SK-N-SH (cell line): ENCODE measurements at regions of chr9 and their contacts with region 1.

Region 1: DNA sequence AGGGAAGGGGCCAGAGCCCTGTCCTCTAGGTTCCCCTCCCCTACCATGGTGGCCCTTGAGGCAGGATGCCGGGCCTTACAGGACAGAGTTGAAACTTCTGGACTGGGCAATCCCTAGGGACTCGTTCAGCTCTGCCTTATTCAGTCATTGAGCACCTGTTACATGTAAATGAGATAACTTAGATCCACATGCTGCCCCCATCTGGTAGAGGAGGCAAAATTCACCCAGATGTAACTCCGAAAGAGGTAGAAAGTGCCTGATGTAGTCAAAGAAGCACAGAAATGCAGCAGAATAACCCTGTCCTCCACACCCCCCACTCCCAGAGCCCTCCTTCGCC is 1.5 kb downstream of the GGTA1 start:
- DNase-seq: peak; percentile 82
- H3K4me3 ChIP-seq: peak overlapping the region; percentile 52 to 70
- H3K27ac ChIP-seq: no peak overlapping the region
- H3K4me1 ChIP-seq: peaks cover 0 to 18% of the 10 kb centered on the region in 2 experiments; a peak in 2 of 4 replicates
- H3K27me3 ChIP-seq: no peaks in the 10 kb centered on the region
- CTCF ChIP-seq: peak; percentile 76
- EP300 ChIP-seq: no peak
- RAD21 ChIP-seq: peak; percentile 61

Region 2: DNA sequence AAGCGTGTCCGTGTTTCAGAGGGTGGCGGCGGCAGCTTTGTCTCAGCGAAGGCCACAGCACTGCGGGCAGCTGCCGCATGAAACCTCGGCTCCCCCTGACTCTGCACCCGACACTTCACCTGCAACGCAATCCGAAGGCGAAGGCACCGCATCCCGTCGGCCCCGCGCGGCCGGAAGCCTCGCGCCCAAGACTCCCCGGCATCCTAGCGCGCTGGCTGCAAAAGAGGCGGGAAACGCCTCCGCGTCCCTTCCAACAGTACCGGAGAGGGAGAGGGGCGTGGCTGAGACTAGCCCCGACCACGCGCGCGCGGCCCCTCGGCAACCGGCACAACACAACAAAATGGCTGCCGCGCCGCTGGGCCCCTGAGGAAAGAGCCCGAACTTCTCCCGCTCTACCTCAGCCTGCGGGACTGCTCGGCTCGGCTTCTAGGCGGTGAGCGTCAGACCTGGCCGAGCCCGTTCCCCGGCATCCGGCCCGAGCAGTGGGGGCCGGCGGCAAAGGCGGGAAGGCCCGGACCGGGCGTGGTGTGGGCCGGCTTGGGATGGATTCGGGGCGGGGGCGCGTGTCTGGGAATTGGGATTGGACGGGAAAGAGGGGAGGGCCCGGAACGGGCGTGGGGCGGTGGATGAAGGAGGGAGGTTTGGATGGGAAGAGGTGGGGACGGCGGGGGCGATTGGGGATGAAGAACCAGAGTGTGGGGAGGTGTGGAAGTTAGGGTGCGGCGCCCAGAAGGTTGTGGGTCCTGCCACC is 423.3 kb before region 1 on chr9 and contains the start of gene CNTRL:
- CTCF ChIA-PET with region 1: no interaction called
- POLR2A ChIA-PET with region 1: no interaction called
- DNase-seq: peak; percentile 93
- H3K4me3 ChIP-seq: peak within 1 kb of the TSS; percentile 76 to 84
- H3K27ac ChIP-seq: peak within 1 kb of the TSS; percentile 93 to 94
- H3K4me1 ChIP-seq: peaks cover 7 to 12% of the 10 kb centered on the region in 2 experiments; a peak in 3 of 4 replicates
- H3K27me3 ChIP-seq: no peaks in the 10 kb centered on the region
- CTCF ChIP-seq: no peak
- EP300 ChIP-seq: no peak
- RAD21 ChIP-seq: no peak
- polyA plus RNA-seq, gene CNTRL: 3.6 and 4.1 TPM in 2 replicates

Region 3: DNA sequence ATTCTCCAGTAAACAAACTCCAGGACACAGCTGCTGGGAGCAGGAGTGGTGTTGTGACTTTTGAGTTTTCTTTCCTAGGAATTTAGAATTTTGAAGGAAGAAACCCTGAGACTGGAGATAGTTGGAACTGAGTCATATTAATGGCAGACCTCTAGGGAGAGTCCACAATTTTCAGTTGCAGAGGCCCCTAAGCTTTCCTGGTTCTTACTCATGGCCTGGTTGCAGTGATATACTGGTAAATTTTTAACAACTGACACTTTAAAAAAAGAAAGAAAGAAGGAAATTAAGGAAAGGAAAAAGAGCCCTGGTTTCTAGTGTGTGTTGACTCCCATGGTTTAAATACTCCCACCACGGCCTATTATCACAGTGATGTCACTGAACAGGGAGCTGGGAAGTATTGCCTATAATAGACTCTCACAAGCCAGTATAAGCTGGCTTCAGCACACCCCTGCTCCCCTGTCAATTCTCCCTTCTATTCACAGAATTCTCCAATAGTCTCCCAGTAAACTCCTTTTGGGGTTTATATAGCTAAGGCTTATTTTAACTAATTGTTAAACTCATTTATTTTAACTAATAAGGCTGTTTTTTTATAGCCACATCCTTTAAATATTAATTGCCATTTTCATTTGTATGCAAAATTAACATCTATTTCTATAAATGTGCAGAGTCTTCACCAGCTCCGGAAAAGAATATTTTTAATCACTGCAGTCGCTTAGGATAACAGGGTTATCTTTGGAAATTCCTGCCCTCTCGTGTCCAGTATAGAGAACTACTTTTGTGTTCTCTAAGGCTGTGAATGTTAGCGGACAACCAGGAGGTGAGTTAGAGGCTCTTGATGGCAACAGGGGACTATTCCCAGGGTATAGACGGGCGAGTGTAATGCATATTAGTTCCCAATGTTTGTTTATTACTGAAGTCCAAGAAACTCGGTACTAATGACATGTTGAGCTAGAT is 58.1 kb before region 1 on chr9:
- CTCF ChIA-PET with region 1: interaction called, 10 read pairs
- POLR2A ChIA-PET with region 1: no interaction called
- DNase-seq: peak; percentile 33
- H3K4me3 ChIP-seq: no peak overlapping the region; a peak in 1 of 4 replicates
- H3K27ac ChIP-seq: no peak overlapping the region
- H3K4me1 ChIP-seq: no peaks in the 10 kb centered on the region
- H3K27me3 ChIP-seq: peaks cover 17% of the 10 kb centered on the region; the same call in 1 of the 2 replicates
- CTCF ChIP-seq: peak; percentile 53
- EP300 ChIP-seq: no peak
- RAD21 ChIP-seq: peak; percentile 45

Region 4: GRCh38 chr9:121510766-121511550 is 12.8 kb after region 1 on chr9:
- CTCF ChIA-PET with region 1: interaction called, 11 read pairs
- POLR2A ChIA-PET with region 1: interaction called, 3 read pairs
- DNase-seq: peak; percentile 77
- H3K4me3 ChIP-seq: no peak overlapping the region
- H3K27ac ChIP-seq: peak overlapping the region; percentile 40 to 96; a peak in 3 of 4 replicates
- H3K4me1 ChIP-seq: peaks cover 0 to 12% of the 10 kb centered on the region in 2 experiments; a peak in 2 of 4 replicates
- H3K27me3 ChIP-seq: no peaks in the 10 kb centered on the region
- CTCF ChIP-seq: no peak
- EP300 ChIP-seq: peak in 1 of 2 experiments; percentile 85; a peak in 2 of 4 replicates
- RAD21 ChIP-seq: peak; percentile 10; the same call in 1 of the 2 replicates

Region 5: GRCh38 chr9:121538246-121538645 is 40.1 kb after region 1 on chr9:
- CTCF ChIA-PET with region 1: interaction called, 32 read pairs
- POLR2A ChIA-PET with region 1: no interaction called
- DNase-seq: peak; percentile 56
- H3K4me3 ChIP-seq: no peak overlapping the region
- H3K27ac ChIP-seq: no peak overlapping the region
- H3K4me1 ChIP-seq: no peaks in the 10 kb centered on the region; a peak in 1 of 4 replicates
- H3K27me3 ChIP-seq: no peaks in the 10 kb centered on the region
- CTCF ChIP-seq: peak; percentile 29
- EP300 ChIP-seq: no peak
- RAD21 ChIP-seq: peak; percentile 75